K562 (cell line): ENCODE measurements at regions of chr1 and their contacts with region 1.

Region 1: GRCh38 chr1:12019858-12020509 is 686 bp downstream of the MIIP start:
- DNase-seq: peak in 3 of 4 experiments; percentile 54 to 73 (median 69)
- ATAC-seq: peak; percentile 11; the same call in 2 of the 3 replicates
- H3K4me3 ChIP-seq: peak overlapping the region; percentile 69
- H3K27ac ChIP-seq: peak overlapping the region; percentile 75
- H3K4me1 ChIP-seq: peaks cover 14 to 46% of the 10 kb centered on the region in 2 experiments
- H3K27me3 ChIP-seq: no peaks in the 10 kb centered on the region
- CTCF ChIP-seq: no peak
- EP300 ChIP-seq: no peak
- POLR2A ChIP-seq: no peak
- RAD21 ChIP-seq: no peak

Region 2: DNA sequence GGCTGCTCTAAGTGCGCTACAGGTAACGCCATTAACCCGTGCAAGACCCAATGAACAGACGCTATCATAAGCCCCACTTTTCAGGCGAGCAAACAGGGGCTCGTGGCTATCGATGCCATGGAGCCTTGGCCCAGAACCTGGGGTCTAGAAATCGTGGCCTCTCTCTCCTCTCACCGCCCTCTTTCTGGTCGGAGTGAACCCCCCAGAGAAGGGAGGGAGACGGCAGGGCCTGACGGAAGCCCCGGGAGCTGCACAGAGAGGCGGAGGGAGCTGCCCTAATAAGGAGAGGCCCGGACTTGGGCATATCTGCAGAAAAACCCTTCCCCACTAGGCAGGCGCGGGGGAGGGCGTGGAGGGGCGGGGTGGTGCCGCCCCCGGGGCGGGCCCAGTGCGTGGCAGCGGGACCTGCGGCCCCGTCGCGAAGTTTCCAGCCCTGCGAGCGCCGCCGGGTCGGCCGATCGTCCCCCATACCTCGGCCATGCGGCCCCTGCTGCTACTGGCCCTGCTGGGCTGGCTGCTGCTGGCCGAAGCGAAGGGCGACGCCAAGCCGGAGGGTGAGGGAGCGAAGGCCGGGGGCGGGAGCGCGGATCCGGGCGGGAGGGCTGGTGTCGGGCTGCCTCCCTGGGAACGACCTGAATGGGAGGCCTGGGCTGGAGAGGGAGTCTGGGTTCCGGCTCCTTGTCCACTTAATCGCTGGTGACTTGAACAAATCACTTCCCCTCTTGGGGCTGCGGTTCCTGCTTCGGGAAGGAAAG is 85.5 kb before region 1 on chr1 and contains the start of gene PLOD1:
- CTCF ChIA-PET with region 1: no interaction called
- POLR2A ChIA-PET with region 1: interaction called, 4 read pairs
- in situ Hi-C with region 1: no loop called
- intact Hi-C with region 1: loop called (anchors 5 kb)
- DNase-seq: peak; percentile 95 to 97 (median 96)
- ATAC-seq: peak; percentile 93
- H3K4me3 ChIP-seq: peak within 1 kb of the TSS; percentile 75
- H3K27ac ChIP-seq: peak within 1 kb of the TSS; percentile 97
- H3K4me1 ChIP-seq: peaks cover 41 to 56% of the 10 kb centered on the region in 2 experiments
- H3K27me3 ChIP-seq: no peaks in the 10 kb centered on the region; a peak in 1 of 5 replicates
- CTCF ChIP-seq: no peak
- EP300 ChIP-seq: no peak
- POLR2A ChIP-seq: peak; percentile 88
- RAD21 ChIP-seq: no peak
- polyA plus RNA-seq, gene PLOD1: 16.6 to 27.1 TPM

Region 3: DNA sequence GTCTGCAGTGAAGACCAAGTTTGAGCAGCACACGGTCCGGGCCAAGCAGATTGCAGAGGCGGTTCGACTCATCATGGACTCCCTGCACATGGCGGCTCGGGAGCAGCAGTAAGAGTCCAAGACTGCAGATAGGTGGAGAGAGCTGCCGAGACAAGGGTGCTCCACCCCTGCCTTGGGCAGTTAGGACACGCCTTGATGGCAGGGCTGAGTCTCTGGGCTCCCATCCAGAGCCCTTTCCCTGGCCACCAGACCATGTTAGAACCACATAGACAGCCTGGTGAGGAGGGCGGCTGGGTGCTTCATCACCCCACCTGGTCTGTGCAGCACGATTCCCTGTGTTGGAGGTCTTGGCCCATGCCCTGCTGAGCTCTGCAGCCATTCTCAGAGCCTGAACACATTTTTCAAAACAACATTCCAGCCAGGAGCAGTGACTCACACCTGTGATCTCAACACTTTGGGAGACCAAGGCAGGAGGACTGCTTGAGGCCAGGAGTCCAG is 17.9 kb before region 1 on chr1:
- CTCF ChIA-PET with region 1: no interaction called
- POLR2A ChIA-PET with region 1: interaction called, 23 read pairs
- in situ Hi-C with region 1: no loop called
- intact Hi-C with region 1: loop called (anchors 2 kb)
- DNase-seq: no peak
- ATAC-seq: no peak; the same call in 2 of the 3 replicates
- H3K4me3 ChIP-seq: no peak overlapping the region
- H3K27ac ChIP-seq: no peak overlapping the region; the same call in 2 of the 3 replicates
- H3K4me1 ChIP-seq: peaks cover 24 to 30% of the 10 kb centered on the region in 2 experiments; a peak in 4 of 5 replicates
- H3K27me3 ChIP-seq: no peaks in the 10 kb centered on the region
- CTCF ChIP-seq: no peak
- EP300 ChIP-seq: no peak
- POLR2A ChIP-seq: no peak
- RAD21 ChIP-seq: no peak

Region 4: DNA sequence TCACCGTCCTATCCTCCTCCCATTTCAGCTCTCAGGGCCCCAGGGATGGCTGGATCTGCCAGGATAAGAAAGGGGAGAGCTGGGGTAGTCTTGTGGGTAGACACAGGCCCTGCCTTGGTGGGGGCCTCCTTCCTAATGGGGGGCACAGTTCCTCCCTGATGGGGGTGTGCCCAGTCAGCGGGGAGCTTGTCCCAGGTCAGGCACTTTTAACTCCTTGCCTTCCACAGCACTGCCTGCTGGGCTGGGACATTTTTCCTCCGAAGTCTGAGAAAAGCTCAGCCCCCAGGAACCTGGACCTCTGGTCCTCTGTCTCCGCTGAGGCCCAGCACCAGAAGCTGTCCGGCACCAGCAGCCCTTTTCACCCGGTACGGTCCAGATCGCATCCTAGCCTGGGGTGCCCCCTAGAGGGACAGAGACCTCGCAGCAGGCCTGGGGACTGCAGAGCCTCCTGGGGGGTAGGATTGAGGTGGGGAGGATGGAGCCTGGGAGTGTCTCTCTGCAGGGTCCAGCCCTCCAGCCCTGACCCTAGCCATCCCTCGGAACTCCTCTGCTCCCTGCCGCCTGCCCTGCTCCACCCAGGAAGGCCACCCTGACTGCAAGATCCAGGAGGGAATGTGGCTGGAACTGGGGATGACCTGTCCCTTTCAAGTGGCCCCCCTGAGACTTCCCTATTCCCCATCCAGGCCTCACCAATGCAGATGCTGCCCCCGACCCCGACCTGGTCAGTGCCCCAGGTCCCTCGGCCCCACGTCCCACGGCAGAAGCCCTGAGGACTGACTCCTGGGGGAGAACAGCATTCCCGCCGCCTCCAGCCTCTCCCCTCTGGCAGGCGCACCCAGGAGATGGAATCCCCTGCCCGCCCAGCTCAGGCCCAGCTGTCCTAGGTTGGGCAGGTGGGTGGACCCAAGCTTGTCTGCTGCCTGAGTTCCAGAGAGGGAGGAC is 11.3 kb after region 1 on chr1:
- CTCF ChIA-PET with region 1: no interaction called
- POLR2A ChIA-PET with region 1: interaction called, 28 read pairs
- in situ Hi-C with region 1: no loop called
- intact Hi-C with region 1: no loop called
- DNase-seq: peak; percentile 70 to 83 (median 80)
- ATAC-seq: peak; percentile 94
- H3K4me3 ChIP-seq: no peak overlapping the region
- H3K27ac ChIP-seq: no peak overlapping the region
- H3K4me1 ChIP-seq: peaks cover 8 to 34% of the 10 kb centered on the region in 2 experiments; a peak in 4 of 5 replicates
- H3K27me3 ChIP-seq: no peaks in the 10 kb centered on the region
- CTCF ChIP-seq: peak; percentile 88 to 91 (median 89)
- EP300 ChIP-seq: no peak
- POLR2A ChIP-seq: no peak
- RAD21 ChIP-seq: peak; percentile 80 to 90

Region 5: DNA sequence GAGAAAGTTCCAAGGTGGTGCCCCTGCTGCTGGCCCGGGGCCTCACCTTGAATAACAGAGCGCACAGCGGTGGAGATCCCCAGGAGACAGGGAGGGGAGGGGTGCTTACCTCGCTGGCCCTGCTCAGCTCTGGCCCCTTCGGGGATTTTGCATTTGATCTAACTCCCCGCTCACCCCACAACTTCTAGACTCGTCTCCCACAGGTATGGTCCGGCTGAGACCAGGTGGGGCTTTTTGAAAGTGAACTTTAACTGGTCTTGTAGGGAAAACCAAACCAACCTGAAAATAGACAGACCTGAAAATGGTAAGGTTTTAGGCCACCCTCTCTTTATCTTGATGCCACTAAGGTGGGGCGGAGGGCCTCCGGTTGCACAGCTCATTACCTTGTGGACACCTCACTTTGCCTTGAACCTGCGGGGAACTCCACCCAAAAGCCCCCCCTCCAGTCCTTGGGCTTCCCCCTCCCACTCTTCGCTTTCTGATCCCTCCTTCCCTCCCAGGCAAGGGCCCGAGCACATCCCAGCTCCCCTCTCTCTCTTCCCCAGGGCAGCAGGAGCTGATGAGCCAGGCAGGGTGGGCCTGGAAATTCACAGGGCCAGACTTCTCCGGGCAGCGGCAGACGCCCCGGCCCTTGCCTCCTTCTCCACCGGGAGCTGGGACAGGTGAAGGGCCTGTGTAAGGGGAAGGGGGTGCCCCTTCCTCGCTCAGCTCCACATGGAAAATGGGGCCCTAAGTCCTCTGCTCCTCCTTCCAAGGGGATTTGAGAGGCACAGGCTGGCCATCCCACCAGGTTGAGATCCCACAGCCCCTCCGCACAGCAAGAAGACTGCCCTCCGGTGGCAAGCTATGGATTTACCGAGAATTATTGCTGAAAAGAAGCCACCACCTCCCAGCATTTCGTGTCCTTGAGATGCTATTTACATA is 59.2 kb after region 1 on chr1:
- CTCF ChIA-PET with region 1: no interaction called
- POLR2A ChIA-PET with region 1: interaction called, 5 read pairs
- in situ Hi-C with region 1: no loop called
- intact Hi-C with region 1: loop called (anchors 5 kb)
- DNase-seq: peak; percentile 74 to 83 (median 78)
- ATAC-seq: peak; percentile 68
- H3K4me3 ChIP-seq: no peak overlapping the region
- H3K27ac ChIP-seq: peak overlapping the region; percentile 49; the same call in 1 of the 3 replicates
- H3K4me1 ChIP-seq: peaks cover 46 to 50% of the 10 kb centered on the region in 2 experiments
- H3K27me3 ChIP-seq: no peaks in the 10 kb centered on the region
- CTCF ChIP-seq: peak; percentile 85 to 91 (median 86)
- EP300 ChIP-seq: no peak
- POLR2A ChIP-seq: no peak
- RAD21 ChIP-seq: peak; percentile 59 to 87